ENCODE measurements at regions of chr9 and their contacts with region 1.

Region 1: DNA sequence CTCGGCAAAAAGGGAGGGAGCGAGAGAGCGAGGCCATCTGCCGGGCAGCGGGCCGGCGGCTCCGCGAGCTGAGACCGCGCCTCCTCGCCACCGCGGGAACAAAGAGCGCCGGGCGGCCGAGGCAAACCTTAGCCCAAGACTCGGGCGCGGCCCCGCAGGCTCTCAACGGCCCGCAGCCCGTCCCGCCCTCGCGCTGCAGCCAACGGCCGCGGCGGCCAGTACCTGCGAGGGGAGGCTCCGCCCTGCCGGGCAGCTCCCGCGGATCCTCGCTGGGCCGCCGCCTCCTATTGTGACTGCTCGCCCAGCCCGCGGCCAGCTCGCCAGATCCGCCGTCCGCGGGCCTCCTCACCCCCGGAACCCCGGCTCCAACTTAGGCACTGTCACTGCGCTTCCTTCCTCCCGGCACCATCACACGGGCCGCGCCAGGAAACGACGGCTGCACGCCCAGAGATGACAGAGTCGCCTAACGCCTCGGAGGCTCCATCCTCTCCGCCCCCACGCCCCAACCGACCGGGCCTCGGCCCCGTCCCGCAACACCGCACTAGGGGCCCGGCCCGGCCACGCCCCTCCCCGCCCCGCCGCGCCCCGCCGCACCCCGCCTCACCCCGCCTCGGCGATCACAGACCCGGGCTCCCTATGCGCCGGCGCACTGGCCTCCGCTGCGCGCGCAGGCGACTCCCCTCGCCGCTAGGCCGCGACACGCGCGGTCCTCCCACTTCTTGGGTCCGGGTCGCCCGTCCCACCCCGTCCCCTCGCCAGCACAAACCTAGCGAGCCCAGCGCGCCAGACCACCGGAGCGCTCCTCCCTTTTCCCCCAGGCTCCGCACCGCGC is 479 bp upstream of the RNF38 start:
- DNase-seq: peak; percentile 93 to 95
- ATAC-seq: peak; percentile 76 to 91 (median 80)
- H3K4me3 ChIP-seq: peak overlapping the region; percentile 77
- H3K4me3 Mint-ChIP-seq: peak overlapping the region; percentile 96
- H3K27ac ChIP-seq: peak overlapping the region; percentile 96
- H3K27ac Mint-ChIP-seq: peak overlapping the region; percentile 99
- H3K4me1 ChIP-seq: peaks cover 5% of the 10 kb centered on the region
- H3K4me1 Mint-ChIP-seq: peaks cover 44% of the 10 kb centered on the region in 2 donors
- H3K27me3 ChIP-seq: no peaks in the 10 kb centered on the region
- H3K27me3 Mint-ChIP-seq: no peaks in the 10 kb centered on the region
- CTCF ChIP-seq: no peak

Region 2: DNA sequence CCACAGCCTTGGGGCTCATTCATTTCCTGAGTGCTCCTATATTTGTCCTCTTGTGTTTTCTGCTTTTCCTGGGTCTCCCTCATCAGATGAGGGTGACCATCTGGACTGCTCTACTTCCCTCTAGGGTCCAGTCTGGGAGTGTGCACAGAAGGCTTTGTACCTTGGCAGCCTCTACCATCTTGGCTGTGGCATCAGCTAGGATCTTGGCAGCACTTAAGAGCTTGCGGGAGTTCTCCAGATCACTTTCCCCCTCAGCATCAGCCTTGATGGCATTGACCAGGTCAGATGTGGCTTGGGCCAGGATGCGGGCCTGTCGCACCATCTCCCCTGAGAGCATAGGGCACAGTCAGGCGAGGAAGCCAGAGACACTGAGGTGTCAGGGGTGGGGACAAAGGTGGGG is 684.3 kb before region 1 on chr9:
- intact Hi-C with region 1: no loop called
- DNase-seq: no peak
- ATAC-seq: no peak
- H3K4me3 ChIP-seq: no peak overlapping the region
- H3K4me3 Mint-ChIP-seq: no peak overlapping the region
- H3K27ac ChIP-seq: no peak overlapping the region
- H3K27ac Mint-ChIP-seq: peak overlapping the region; percentile 50 to 70
- H3K4me1 ChIP-seq: peaks cover 3% of the 10 kb centered on the region
- H3K4me1 Mint-ChIP-seq: peaks cover 0 to 22% of the 10 kb centered on the region in 2 donors
- H3K27me3 ChIP-seq: no peaks in the 10 kb centered on the region
- H3K27me3 Mint-ChIP-seq: no peaks in the 10 kb centered on the region
- CTCF ChIP-seq: no peak

Region 3: GRCh38 chr9:36245906-36246305 is 154.6 kb before region 1 on chr9:
- intact Hi-C with region 1: no loop called
- DNase-seq: no peak
- ATAC-seq: no peak
- H3K4me3 ChIP-seq: no peak overlapping the region
- H3K4me3 Mint-ChIP-seq: no peak overlapping the region
- H3K27ac ChIP-seq: no peak overlapping the region
- H3K27ac Mint-ChIP-seq: peak overlapping the region in 1 of 2 donors; percentile 8
- H3K4me1 ChIP-seq: no peaks in the 10 kb centered on the region
- H3K4me1 Mint-ChIP-seq: peaks cover 0 to 9% of the 10 kb centered on the region in 2 donors
- H3K27me3 ChIP-seq: no peaks in the 10 kb centered on the region
- H3K27me3 Mint-ChIP-seq: no peaks in the 10 kb centered on the region
- CTCF ChIP-seq: no peak

Region 4: GRCh38 chr9:36572515-36573418 is 172.2 kb after region 1 on chr9 and contains the start of gene MELK:
- intact Hi-C with region 1: loop called (anchors 5 kb)
- DNase-seq: peak; percentile 87 to 88
- ATAC-seq: peak; percentile 94
- H3K4me3 ChIP-seq: peak within 1 kb of the TSS; percentile 56
- H3K4me3 Mint-ChIP-seq: peak within 1 kb of the TSS; percentile 93
- H3K27ac ChIP-seq: peak within 1 kb of the TSS; percentile 48
- H3K27ac Mint-ChIP-seq: peak within 1 kb of the TSS; percentile 69 to 84
- H3K4me1 ChIP-seq: peaks cover 14% of the 10 kb centered on the region
- H3K4me1 Mint-ChIP-seq: peaks cover 6 to 21% of the 10 kb centered on the region in 2 donors
- H3K27me3 ChIP-seq: no peaks in the 10 kb centered on the region
- H3K27me3 Mint-ChIP-seq: no peaks in the 10 kb centered on the region
- CTCF ChIP-seq: no peak
- total RNA-seq, gene MELK: 1.3 to 1.6 (median 1.5) TPM

Measured in natural killer cell (primary cell).